MCF 10A (cell line): ENCODE measurements at regions of chr13 and their contacts with region 1.

Region 1: DNA sequence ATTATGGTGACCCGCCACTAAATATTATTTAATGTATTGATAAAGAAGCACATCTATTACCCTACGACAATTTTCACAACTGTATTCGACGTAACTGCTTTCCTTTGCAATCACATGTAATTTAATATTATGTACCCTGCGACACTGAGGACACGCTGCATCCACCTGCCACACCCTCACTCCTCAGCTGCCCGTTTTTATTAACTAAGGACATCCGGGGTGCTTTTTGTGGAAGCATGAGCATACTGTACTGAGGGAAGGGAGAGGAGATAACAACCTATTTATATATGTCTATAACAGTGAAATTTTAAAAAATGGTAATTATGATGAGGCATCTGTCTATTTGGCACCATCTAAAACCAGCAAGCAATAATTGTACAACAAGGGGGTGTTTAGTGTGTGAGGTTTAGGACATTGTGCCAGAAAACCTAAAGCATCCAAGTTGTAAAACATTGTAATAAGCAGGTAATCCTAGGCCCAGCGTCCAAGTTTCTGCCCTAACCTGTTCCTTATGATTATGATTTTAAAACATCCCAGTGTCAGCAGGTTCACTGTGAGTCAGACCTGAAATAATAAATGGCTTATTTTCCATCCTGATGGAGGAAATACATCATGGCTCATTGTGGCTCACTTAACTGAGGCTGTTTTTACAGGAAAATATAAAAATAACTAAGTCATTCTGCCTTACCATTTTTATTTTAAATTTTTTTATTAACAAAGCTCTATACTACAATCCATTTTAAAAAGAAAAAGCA is 56.3 kb downstream of the FOXO1 start:
- DNase-seq: peak; percentile 42
- H3K4me3 Mint-ChIP-seq: peak overlapping the region; percentile 33
- H3K27ac Mint-ChIP-seq: no peak overlapping the region
- H3K4me1 Mint-ChIP-seq: peaks cover 31% of the 10 kb centered on the region
- H3K27me3 Mint-ChIP-seq: no peaks in the 10 kb centered on the region
- CTCF ChIP-seq: no peak

Region 2: DNA sequence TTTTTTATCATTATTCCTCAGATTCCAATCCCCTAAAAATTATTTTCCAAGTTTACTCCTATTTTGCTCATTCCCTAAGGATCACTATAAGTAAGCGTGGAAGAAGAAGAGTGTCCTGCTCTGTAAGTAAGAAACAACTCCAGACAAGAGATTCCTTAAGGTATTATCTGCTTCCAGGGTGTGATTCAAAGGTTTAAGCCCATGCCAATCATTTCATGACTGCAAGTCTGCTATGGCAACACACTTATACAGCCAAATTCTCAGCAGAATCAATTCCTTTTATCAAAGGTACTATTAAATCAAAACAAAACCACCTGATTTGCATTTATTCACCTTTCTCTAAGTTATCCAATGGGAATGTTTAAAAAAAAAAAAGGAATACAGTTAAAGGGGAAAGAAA is 12.6 kb after region 1 on chr13:
- CTCF ChIA-PET with region 1: no interaction called
- POLR2A ChIA-PET with region 1: interaction called, 13 read pairs
- intact Hi-C with region 1: no loop called
- DNase-seq: no peak
- H3K4me3 Mint-ChIP-seq: peak overlapping the region; percentile 8
- H3K27ac Mint-ChIP-seq: no peak overlapping the region
- H3K4me1 Mint-ChIP-seq: peaks cover 49% of the 10 kb centered on the region
- H3K27me3 Mint-ChIP-seq: no peaks in the 10 kb centered on the region
- CTCF ChIP-seq: no peak

Region 3: DNA sequence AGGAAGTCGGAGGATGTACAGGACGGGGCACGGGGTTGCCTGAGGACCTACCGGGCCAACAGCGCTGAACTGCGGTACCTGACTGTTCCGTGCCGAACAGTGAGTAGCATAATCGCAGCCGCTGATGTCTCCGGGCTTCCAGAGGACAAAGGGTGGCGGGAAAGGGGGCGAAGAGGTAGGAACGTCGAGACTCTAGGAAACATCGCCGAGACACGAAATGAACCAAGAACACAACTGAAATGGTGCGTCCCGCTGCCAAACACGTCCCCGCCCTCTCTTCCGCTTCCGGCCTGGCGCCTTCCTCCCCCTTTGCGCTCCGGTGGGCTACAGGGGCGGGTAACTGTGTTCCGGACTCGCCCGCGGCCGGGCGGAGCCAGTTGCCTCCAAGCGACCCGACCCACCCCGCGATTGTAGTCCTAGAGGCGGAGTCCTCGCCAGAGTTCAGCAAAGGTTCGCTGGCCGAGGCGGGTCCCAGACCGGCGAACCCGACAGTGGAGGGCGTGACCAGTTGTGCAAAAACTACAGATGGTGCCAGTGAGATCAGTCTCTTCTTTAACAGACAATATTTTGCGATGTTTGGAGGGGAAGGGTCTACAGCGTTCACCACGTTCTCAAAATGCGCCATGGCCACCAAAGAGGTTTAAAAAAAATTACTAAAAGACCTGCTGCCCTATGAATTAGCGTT is 160.9 kb after region 1 on chr13 and contains the start of gene MRPS31:
- CTCF ChIA-PET with region 1: no interaction called
- POLR2A ChIA-PET with region 1: no interaction called
- intact Hi-C with region 1: no loop called
- DNase-seq: peak; percentile 94
- H3K4me3 Mint-ChIP-seq: peak within 1 kb of the TSS; percentile 94
- H3K27ac Mint-ChIP-seq: peak within 1 kb of the TSS; percentile 91
- H3K4me1 Mint-ChIP-seq: peaks cover 9% of the 10 kb centered on the region
- H3K27me3 Mint-ChIP-seq: no peaks in the 10 kb centered on the region
- CTCF ChIP-seq: no peak
- total RNA-seq, gene MRPS31: 19.2 and 19.4 TPM in 2 replicates